B cell (primary cell): ENCODE measurements at regions of chr17 and their contacts with region 1.

Region 1: DNA sequence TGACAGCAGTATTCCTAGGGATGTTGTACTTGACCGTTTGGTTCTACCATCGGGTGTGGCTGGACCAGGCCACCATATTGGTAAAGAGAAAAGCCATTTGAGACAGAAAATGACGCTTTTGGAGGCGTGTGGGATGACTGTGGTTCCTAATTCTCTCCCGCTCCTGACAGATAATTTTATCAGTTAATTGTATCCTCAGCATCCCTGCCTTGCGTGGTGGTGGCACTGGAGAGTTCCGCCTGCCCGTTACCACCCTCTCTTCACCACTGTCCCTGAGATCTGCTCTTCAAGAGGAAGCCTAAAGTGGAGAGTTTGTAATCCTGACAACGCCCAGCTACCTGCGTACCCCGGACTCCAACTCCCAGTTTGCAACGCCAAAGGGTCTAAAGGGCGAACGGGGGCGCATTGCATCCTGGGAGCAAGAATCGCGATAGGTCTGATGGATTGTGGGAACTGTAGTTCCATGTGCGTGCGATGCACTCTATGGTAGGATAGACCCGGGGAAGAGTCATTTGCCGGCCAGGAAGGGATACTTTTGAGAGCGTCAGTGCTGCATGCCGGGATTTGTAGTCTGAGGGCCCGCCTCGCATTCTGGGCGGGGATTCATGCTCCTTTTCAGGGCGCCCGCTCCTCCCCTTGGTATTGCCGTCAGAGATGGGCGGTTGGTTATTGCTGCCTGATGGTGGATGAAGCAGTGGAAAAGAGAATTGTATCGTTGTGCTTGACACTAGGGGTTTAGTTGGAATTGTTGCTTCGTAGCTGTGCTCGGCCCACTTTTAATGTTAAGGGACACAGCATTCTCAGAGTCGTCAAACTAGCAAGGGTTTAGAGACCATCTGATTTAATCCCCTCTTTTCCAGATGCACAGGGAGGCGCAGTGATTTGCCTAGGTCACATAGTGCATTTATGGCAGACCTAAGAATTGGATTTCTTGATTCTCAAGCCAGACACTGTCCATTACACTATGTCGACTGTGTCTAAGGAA is 965 bp upstream of the PHF12 start:
- DNase-seq: peak; percentile 99
- ATAC-seq: peak; percentile 68
- H3K4me3 ChIP-seq: peak overlapping the region; percentile 68 to 99 (median 86)
- H3K4me3 Mint-ChIP-seq: no peak overlapping the region
- H3K27ac ChIP-seq: peak overlapping the region; percentile 97 to 98
- H3K27ac Mint-ChIP-seq: no peak overlapping the region
- H3K4me1 ChIP-seq: peaks cover 24 to 28% of the 10 kb centered on the region in 2 donors
- H3K4me1 Mint-ChIP-seq: peaks cover 17% of the 10 kb centered on the region
- H3K27me3 ChIP-seq: no peaks in the 10 kb centered on the region
- H3K27me3 Mint-ChIP-seq: no peaks in the 10 kb centered on the region
- CTCF ChIP-seq: no peak

Region 2: DNA sequence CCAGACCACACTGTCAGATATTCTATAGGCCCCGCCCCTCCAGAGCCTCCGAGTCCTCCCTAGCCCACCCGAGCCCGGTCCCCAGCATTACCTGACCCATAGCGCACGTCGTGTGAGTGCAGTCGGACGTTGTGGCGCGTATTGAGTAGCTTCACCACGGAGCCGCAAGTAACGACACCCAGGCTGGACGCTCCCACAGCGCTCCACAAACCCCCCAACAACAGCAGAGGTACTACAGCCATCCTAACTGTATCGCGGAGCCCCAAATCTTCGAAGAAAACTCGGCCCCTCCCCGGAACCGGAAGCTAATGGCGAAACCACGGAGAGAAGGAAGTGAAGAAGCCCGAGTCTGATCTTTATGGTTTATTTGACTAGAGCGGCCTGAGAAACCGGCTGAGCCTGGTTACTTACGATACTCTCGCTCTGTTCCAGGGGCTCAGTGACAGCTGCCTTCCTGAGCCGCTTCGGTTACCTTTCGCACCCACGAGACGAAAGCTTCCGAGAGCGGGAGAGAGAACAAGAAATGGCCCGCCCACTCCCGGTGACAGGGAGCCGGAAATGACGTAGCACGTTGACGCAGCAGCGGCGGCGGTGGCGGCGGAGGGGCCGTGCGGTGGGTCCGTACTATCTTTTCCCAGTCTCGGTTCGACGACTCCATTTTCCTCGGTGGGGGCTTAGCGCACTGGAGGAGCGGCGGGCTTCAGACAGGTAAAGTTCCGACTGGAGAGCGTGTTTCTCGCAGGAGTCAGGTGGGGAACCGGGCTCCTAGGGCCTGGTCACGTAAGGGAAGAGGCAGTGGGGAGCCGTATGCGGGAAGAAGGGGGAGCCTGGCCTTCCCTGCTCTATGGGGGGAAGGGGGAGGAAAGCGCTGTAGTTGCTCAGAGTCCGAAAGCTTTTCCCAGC is 290.4 kb before region 1 on chr17 and contains the starts of genes SDF2 and SUPT6H:
- CTCF ChIA-PET with region 1: no interaction called
- POLR2A ChIA-PET with region 1: interaction called, 5 read pairs
- intact Hi-C with region 1: loop called (anchors 1 kb)
- DNase-seq: peak; percentile 97
- ATAC-seq: peak; percentile 84
- H3K4me3 ChIP-seq: peak within 1 kb of the TSS; percentile 85 to 100 (median 99)
- H3K4me3 Mint-ChIP-seq: peak within 1 kb of the TSS; percentile 99
- H3K27ac ChIP-seq: peak within 1 kb of the TSS; percentile 90 to 99
- H3K27ac Mint-ChIP-seq: peak within 1 kb of the TSS; percentile 100
- H3K4me1 ChIP-seq: peaks cover 22 to 29% of the 10 kb centered on the region in 2 donors
- H3K4me1 Mint-ChIP-seq: peaks cover 57% of the 10 kb centered on the region
- H3K27me3 ChIP-seq: no peaks in the 10 kb centered on the region
- H3K27me3 Mint-ChIP-seq: no peaks in the 10 kb centered on the region
- CTCF ChIP-seq: no peak
- total RNA-seq, gene SDF2: 38.1 and 40.4 TPM in 2 replicates
- total RNA-seq, gene SUPT6H: 110 and 119 TPM in 2 replicates

Region 3: GRCh38 chr17:28726226-28727130 is 225.8 kb before region 1 on chr17 and contains the start of gene TLCD1:
- CTCF ChIA-PET with region 1: interaction called, 37 read pairs
- POLR2A ChIA-PET with region 1: interaction called, 27 read pairs
- intact Hi-C with region 1: loop called (anchors 1 kb)
- DNase-seq: peak; percentile 93
- ATAC-seq: peak; percentile 46
- H3K4me3 ChIP-seq: peak within 1 kb of the TSS; percentile 40 to 77 (median 66)
- H3K4me3 Mint-ChIP-seq: peak within 1 kb of the TSS; percentile 98
- H3K27ac ChIP-seq: peak within 1 kb of the TSS; percentile 90 to 97
- H3K27ac Mint-ChIP-seq: peak within 1 kb of the TSS; percentile 100
- H3K4me1 ChIP-seq: peaks cover 38 to 65% of the 10 kb centered on the region in 2 donors
- H3K4me1 Mint-ChIP-seq: peaks cover 67% of the 10 kb centered on the region
- H3K27me3 ChIP-seq: no peaks in the 10 kb centered on the region
- H3K27me3 Mint-ChIP-seq: no peaks in the 10 kb centered on the region
- CTCF ChIP-seq: peak; percentile 99
- total RNA-seq, gene TLCD1: 3.1 and 3.4 TPM in 2 replicates

Region 4: DNA sequence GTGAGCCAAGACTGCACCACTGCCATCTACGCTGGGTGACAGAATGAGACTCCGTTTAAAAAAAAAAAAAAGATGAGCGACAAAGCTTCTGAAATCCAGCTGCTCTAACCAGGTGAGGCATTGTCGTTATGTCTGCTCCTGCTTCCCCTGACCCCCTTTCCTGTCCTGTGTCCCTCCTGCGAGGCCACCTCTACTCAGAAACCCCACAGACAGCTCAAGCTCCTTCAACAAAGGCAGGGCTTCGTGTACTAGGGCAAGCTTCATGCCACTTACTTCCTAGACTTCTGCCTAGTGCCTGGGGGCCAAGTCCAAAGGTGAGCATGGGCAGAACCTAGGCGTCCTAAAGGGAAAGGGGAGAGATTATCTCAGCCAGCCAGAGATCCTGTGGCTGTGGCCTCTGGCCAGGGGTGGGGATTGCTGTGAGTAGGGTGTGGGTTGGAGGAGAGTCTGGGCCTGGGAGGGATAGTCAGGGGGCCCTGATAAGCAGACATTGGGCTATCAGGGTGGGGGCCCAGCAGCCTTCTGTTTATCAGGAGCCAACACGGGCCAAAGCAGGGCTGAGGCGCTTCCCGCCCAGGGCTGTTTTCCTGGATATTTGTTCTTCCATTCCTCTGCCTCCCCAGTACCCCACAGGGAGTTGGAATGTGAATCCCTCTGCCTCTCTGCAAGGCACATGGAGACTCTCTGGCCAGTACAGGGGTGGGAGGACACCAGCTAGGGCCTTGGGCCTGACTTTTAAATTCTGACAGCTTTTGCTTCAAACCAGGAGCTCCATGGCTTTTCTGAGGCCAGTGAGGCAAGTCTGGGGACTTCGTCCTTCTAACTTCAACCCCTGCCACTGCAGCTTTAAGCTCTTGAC is 87.1 kb before region 1 on chr17:
- CTCF ChIA-PET with region 1: no interaction called
- POLR2A ChIA-PET with region 1: no interaction called
- intact Hi-C with region 1: no loop called
- DNase-seq: no peak
- ATAC-seq: peak; percentile 13
- H3K4me3 ChIP-seq: no peak overlapping the region
- H3K4me3 Mint-ChIP-seq: no peak overlapping the region
- H3K27ac ChIP-seq: peak overlapping the region in 1 of 2 donors; percentile 46
- H3K27ac Mint-ChIP-seq: peak overlapping the region; percentile 64
- H3K4me1 ChIP-seq: peaks cover 0 to 17% of the 10 kb centered on the region in 2 donors
- H3K4me1 Mint-ChIP-seq: peaks cover 17% of the 10 kb centered on the region
- H3K27me3 ChIP-seq: no peaks in the 10 kb centered on the region
- H3K27me3 Mint-ChIP-seq: no peaks in the 10 kb centered on the region
- CTCF ChIP-seq: no peak

Region 5: GRCh38 chr17:28878981-28879380 is 73.3 kb before region 1 on chr17:
- CTCF ChIA-PET with region 1: no interaction called
- POLR2A ChIA-PET with region 1: no interaction called
- intact Hi-C with region 1: no loop called
- DNase-seq: no peak
- ATAC-seq: no peak
- H3K4me3 ChIP-seq: no peak overlapping the region
- H3K4me3 Mint-ChIP-seq: no peak overlapping the region
- H3K27ac ChIP-seq: no peak overlapping the region
- H3K27ac Mint-ChIP-seq: peak overlapping the region; percentile 37
- H3K4me1 ChIP-seq: no peaks in the 10 kb centered on the region
- H3K4me1 Mint-ChIP-seq: no peaks in the 10 kb centered on the region
- H3K27me3 ChIP-seq: no peaks in the 10 kb centered on the region
- H3K27me3 Mint-ChIP-seq: no peaks in the 10 kb centered on the region
- CTCF ChIP-seq: no peak

Region 6: DNA sequence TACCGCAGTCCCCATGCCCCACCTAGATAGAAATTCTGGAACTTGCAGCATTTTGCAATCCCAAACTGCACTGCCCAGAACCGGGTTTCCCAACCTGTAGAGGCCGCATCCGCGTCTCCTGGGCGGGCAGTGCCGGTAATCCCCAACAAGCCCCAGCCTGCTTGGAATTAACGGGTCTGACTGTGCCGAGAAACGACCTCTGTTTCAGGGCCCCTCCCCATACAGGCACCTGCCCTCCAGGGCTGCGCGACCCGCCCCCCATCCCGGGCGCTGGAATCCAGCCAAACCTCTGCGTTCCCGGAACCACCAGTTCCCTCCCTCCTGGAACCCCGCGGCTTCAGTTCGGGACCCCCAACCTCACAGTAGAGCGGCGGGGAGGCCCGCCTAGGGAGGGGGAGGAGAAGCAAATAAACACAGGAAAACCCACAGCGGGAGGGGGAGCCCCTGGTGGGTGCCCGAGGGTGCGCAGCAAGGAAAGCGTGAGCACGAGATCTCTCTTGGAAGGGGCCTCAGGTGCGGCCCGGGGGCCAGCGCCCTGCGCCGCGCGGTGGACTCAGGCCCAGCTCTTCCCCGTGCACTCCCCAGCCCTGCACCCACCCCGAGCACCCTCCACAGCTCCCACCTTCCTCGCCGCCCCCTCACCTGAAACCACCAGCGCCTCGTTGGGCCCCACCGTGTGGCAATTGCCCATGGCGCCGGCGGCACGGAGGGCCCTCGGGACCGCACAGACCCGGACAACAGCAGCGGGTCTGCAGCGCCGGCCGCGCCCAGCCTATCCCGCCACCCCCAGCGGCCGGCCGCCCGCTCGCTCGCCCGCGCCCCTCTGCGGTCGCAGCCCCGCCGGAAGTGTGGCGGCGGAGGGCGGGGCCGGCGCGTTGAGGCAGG is 55.2 kb before region 1 on chr17 and contains the start of gene FLOT2:
- CTCF ChIA-PET with region 1: interaction called, 12 read pairs
- POLR2A ChIA-PET with region 1: interaction called, 12 read pairs
- intact Hi-C with region 1: loop called (anchors 1 kb)
- DNase-seq: peak; percentile 76
- ATAC-seq: peak; percentile 60
- H3K4me3 ChIP-seq: peak within 1 kb of the TSS; percentile 71 to 95 (median 82)
- H3K4me3 Mint-ChIP-seq: peak within 1 kb of the TSS; percentile 97
- H3K27ac ChIP-seq: peak within 1 kb of the TSS; percentile 82 to 97
- H3K27ac Mint-ChIP-seq: peak within 1 kb of the TSS; percentile 99
- H3K4me1 ChIP-seq: peaks cover 62 to 73% of the 10 kb centered on the region in 2 donors
- H3K4me1 Mint-ChIP-seq: peaks cover 68% of the 10 kb centered on the region
- H3K27me3 ChIP-seq: no peaks in the 10 kb centered on the region
- H3K27me3 Mint-ChIP-seq: no peaks in the 10 kb centered on the region
- CTCF ChIP-seq: peak; percentile 57
- total RNA-seq, gene FLOT2: 251 and 270 TPM in 2 replicates

Region 7: GRCh38 chr17:28982131-28982951 is 30.1 kb after region 1 on chr17:
- CTCF ChIA-PET with region 1: no interaction called
- POLR2A ChIA-PET with region 1: no interaction called
- intact Hi-C with region 1: loop called (anchors 1 kb)
- DNase-seq: peak; percentile 88
- ATAC-seq: peak; percentile 81
- H3K4me3 ChIP-seq: no peak overlapping the region
- H3K4me3 Mint-ChIP-seq: peak overlapping the region; percentile 67
- H3K27ac ChIP-seq: peak overlapping the region; percentile 58 to 79
- H3K27ac Mint-ChIP-seq: peak overlapping the region; percentile 91
- H3K4me1 ChIP-seq: peaks cover 16 to 21% of the 10 kb centered on the region in 2 donors
- H3K4me1 Mint-ChIP-seq: peaks cover 18% of the 10 kb centered on the region
- H3K27me3 ChIP-seq: no peaks in the 10 kb centered on the region
- H3K27me3 Mint-ChIP-seq: peaks cover 9% of the 10 kb centered on the region
- CTCF ChIP-seq: no peak

Region 8: GRCh38 chr17:28992625-28993600 is 40.6 kb after region 1 on chr17:
- CTCF ChIA-PET with region 1: no interaction called
- POLR2A ChIA-PET with region 1: no interaction called
- intact Hi-C with region 1: no loop called
- DNase-seq: no peak
- ATAC-seq: no peak
- H3K4me3 ChIP-seq: no peak overlapping the region
- H3K4me3 Mint-ChIP-seq: no peak overlapping the region
- H3K27ac ChIP-seq: no peak overlapping the region
- H3K27ac Mint-ChIP-seq: no peak overlapping the region
- H3K4me1 ChIP-seq: no peaks in the 10 kb centered on the region
- H3K4me1 Mint-ChIP-seq: no peaks in the 10 kb centered on the region
- H3K27me3 ChIP-seq: peaks cover 0 to 12% (median 1%) of the 10 kb centered on the region in 4 experiments
- H3K27me3 Mint-ChIP-seq: peaks cover 17% of the 10 kb centered on the region
- CTCF ChIP-seq: no peak

Region 9: DNA sequence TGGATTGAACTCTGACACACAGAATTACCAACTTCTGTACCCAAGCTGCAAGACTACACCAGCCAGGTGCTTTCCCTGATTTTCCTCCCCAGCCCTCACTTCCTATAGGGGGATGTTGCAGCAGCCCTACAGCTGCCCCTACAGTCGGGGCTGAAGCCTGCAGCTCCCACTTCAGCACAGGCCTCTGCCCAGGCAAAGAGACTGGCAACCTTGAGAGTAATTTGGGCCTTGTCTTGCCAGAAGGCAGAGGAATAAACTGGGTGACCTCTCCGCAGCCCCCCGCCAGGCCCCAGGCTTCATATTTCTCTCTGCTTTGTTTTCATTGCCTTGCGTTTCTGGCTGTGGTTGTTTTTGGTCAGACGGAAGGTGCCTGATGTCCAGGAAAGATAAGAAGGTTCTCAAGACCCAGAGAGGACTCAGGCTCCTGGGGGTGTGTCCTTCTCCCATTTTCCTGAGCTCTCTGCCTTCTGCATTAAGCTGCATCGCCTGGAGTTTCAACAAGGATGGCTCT is 1251.2 kb after region 1 on chr17:
- CTCF ChIA-PET with region 1: no interaction called
- POLR2A ChIA-PET with region 1: no interaction called
- intact Hi-C with region 1: no loop called
- DNase-seq: no peak
- ATAC-seq: no peak
- H3K4me3 ChIP-seq: no peak overlapping the region
- H3K4me3 Mint-ChIP-seq: no peak overlapping the region
- H3K27ac ChIP-seq: no peak overlapping the region
- H3K27ac Mint-ChIP-seq: no peak overlapping the region
- H3K4me1 ChIP-seq: no peaks in the 10 kb centered on the region
- H3K4me1 Mint-ChIP-seq: no peaks in the 10 kb centered on the region
- H3K27me3 ChIP-seq: no peaks in the 10 kb centered on the region
- H3K27me3 Mint-ChIP-seq: peaks cover 5% of the 10 kb centered on the region
- CTCF ChIP-seq: no peak